T-cell (primary cell): ENCODE measurements at regions of chr10 and their contacts with region 1.

Region 1: DNA sequence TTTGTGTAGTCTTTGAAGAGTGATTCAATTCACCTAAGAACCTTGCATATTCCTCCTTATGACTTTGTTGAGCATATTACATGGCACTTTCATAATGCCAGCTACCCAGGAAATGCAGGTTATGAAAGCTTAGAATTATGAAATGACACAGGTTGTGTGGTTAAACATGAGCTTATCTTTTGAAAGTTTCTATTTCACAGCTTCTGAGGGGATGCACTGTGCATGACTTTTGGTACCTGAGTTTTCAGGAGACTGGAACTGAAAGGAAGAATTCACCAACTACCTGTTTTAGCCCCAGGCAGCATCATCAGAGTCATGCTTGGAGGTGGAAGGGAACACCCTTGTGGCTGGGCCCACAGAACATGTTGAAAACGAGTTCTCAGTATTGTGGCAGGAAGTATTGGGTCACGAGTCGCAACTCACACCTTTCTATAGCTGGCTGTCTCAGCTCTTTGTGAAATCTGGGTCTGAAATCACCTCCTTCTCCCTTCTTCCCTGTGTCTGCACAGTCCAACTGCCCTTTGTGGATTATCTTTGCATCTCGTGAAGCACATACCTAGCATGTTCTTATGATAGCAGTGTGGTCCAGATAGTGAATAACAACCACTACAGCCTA is 228.2 kb downstream of the PTEN start:
- DNase-seq: peak; percentile 36 to 83 (median 68)
- ATAC-seq: peak; percentile 97 to 99 (median 98)
- H3K4me3 ChIP-seq: no peak overlapping the region
- H3K4me3 Mint-ChIP-seq: peak overlapping the region in 1 of 3 donors; percentile 57
- H3K27ac ChIP-seq: peak overlapping the region; percentile 74
- H3K27ac Mint-ChIP-seq: peak overlapping the region; percentile 92 to 95
- H3K4me1 ChIP-seq: peaks cover 24 to 32% of the 10 kb centered on the region in 2 experiments
- H3K4me1 Mint-ChIP-seq: peaks cover 44 to 53% (median 49%) of the 10 kb centered on the region in 3 donors
- H3K27me3 ChIP-seq: no peaks in the 10 kb centered on the region
- H3K27me3 Mint-ChIP-seq: no peaks in the 10 kb centered on the region

Region 2: GRCh38 chr10:88114368-88114767 is 22.8 kb after region 1 on chr10:
- CTCF ChIA-PET with region 1: interaction called, 7 to 15 read pairs
- POLR2A ChIA-PET with region 1: interaction called in 1 of 2 experiments, 4 read pairs
- DNase-seq: peak in 12 of 35 experiments; percentile 9 to 57 (median 16)
- ATAC-seq: peak in 2 of 4 experiments; percentile 42 to 73
- H3K4me3 ChIP-seq: no peak overlapping the region
- H3K4me3 Mint-ChIP-seq: no peak overlapping the region
- H3K27ac ChIP-seq: no peak overlapping the region
- H3K27ac Mint-ChIP-seq: peak overlapping the region in 1 of 2 donors; percentile 22
- H3K4me1 ChIP-seq: peaks cover 30 to 35% of the 10 kb centered on the region in 2 experiments
- H3K4me1 Mint-ChIP-seq: peaks cover 10 to 22% (median 13%) of the 10 kb centered on the region in 3 donors
- H3K27me3 ChIP-seq: no peaks in the 10 kb centered on the region
- H3K27me3 Mint-ChIP-seq: no peaks in the 10 kb centered on the region

Region 3: DNA sequence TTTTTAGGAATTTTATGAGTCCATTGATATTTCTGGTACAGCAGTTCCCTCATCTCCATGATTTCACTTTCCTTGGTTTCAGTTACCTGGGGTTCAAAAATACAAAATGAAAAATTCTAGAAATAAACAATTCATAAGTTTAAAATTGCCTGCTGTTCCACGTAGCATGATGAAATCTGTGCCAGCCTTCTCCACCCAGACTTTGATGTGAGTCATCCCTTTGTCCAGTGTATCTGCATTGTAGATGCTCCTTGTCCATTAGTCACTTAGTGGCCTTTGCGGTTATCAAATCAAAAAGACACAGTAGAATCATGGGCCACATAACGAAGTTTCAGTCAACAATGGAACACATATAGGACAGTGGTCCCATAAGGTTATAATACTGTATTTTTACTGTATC is 58.7 kb after region 1 on chr10:
- CTCF ChIA-PET with region 1: no interaction called
- POLR2A ChIA-PET with region 1: interaction called in 1 of 2 experiments, 15 read pairs
- DNase-seq: no peak
- ATAC-seq: no peak
- H3K4me3 ChIP-seq: no peak overlapping the region
- H3K4me3 Mint-ChIP-seq: no peak overlapping the region
- H3K27ac ChIP-seq: no peak overlapping the region
- H3K27ac Mint-ChIP-seq: no peak overlapping the region
- H3K4me1 ChIP-seq: peaks cover 0 to 6% of the 10 kb centered on the region in 2 experiments
- H3K4me1 Mint-ChIP-seq: peaks cover 10 to 16% (median 15%) of the 10 kb centered on the region in 3 donors
- H3K27me3 ChIP-seq: no peaks in the 10 kb centered on the region
- H3K27me3 Mint-ChIP-seq: no peaks in the 10 kb centered on the region

Region 4: GRCh38 chr10:88386821-88387773 is 295.5 kb after region 1 on chr10:
- CTCF ChIA-PET with region 1: interaction called in 1 of 2 experiments, 10 read pairs
- POLR2A ChIA-PET with region 1: no interaction called
- DNase-seq: peak in 9 of 35 experiments; percentile 2 to 53 (median 10)
- ATAC-seq: peak in 3 of 4 experiments; percentile 18 to 51 (median 44)
- H3K4me3 ChIP-seq: peak overlapping the region in 1 of 2 donors; percentile 15
- H3K4me3 Mint-ChIP-seq: no peak overlapping the region
- H3K27ac ChIP-seq: peak overlapping the region; percentile 96
- H3K27ac Mint-ChIP-seq: no peak overlapping the region
- H3K4me1 ChIP-seq: peaks cover 34 to 73% of the 10 kb centered on the region in 2 experiments
- H3K4me1 Mint-ChIP-seq: peaks cover 16 to 30% (median 30%) of the 10 kb centered on the region in 3 donors
- H3K27me3 ChIP-seq: no peaks in the 10 kb centered on the region
- H3K27me3 Mint-ChIP-seq: no peaks in the 10 kb centered on the region